ENCODE measurements at regions of chr11 and their contacts with region 1.

Region 1: DNA sequence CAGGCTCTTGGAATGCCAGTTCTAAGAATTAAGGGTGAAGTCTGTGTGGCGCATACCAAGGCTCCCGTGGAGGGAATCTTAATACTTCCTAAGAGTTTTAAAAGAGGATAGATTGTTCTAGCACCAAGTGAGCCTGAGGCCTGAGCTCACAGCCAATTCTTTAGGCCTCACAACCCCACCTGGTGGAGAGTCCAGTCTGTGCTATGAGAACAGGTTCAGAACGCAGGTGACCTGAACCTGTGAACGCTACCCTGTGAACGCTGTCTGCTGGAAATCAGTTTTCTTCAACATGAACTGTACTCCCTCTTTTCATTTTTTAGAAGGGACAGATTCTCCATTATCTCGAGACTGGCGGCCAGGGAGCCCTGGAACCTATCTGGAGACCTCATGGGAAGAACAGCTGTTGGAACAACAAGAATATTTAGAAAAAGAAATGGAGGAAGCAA is 43.2 kb upstream of the DLAT start:
- DNase-seq: peak; percentile 82 to 88
- ATAC-seq: peak; percentile 86

Region 2: GRCh38 chr11:111878849-111879636 is 103.0 kb before region 1 on chr11 and contains the starts of genes CFAP68 and FDXACB1:
- intact Hi-C with region 1: loop called in 1 of 2 experiments (anchors 5 kb)
- DNase-seq: peak; percentile 95 to 98
- ATAC-seq: peak; percentile 89
- total RNA-seq, gene CFAP68: 19.1 to 23.0 TPM
- total RNA-seq, gene FDXACB1: 1.2 to 1.9 TPM

Region 3: GRCh38 chr11:111933872-111934271 is 48.2 kb before region 1 on chr11:
- intact Hi-C with region 1: loop called in 1 of 2 experiments (anchors 5 kb)
- DNase-seq: no peak
- ATAC-seq: no peak